Transverse colon (tissue), 4 donors: ENCODE measurements at regions of chrX and their contacts with region 1.

Region 1: DNA sequence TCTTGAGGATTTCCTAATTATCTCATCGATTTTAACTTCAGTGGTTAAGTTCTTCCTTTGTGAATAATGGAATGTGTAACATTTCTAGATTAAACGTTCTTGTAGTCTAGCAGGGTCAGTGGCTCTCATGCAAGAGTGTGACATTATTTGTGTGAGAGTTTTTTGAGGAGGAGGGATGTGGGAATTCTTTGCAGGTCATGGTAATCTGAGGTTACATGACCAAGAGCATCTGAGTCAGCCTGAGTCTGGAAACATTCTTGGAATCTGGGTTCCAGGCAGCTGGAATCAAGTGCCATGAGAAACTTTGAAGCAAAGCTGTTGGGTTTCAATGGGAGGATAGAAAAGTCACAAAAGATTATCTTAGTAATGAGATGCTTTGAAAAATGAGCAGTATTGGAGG is 49.5 kb downstream of the GK start:
- DNase-seq: no peak
- H3K4me3 ChIP-seq: no peak overlapping the region
- H3K27ac ChIP-seq: no peak overlapping the region
- H3K4me1 ChIP-seq: no peaks in the 10 kb centered on the region
- H3K27me3 ChIP-seq: no peaks in the 10 kb centered on the region
- CTCF ChIP-seq: no peak
- EP300 ChIP-seq: no peak
- POLR2A ChIP-seq: no peak

Region 2: DNA sequence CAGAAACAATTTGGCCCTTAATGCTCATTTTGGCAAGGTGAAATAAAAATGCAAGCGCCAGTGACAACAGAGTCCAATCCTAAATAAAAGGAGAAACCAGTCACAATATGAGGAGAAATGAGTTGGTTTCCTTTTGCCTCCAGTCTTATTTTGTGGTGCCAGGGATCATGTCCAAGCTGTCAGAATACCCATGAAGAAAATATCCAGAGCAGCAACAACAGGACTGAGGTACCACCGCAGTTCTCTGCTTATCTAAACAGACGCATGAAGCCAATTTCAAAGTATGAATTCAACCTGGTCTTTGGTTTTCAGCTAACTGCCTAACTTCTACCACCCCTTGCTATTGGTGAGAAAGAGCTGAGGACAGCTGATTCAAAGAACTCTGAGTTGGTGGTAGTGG is 687.3 kb before region 1 on chrX:
- in situ Hi-C with region 1: no loop called
- intact Hi-C with region 1: no loop called
- DNase-seq: no peak
- H3K4me3 ChIP-seq: no peak overlapping the region
- H3K27ac ChIP-seq: no peak overlapping the region
- H3K4me1 ChIP-seq: no peaks in the 10 kb centered on the region
- H3K27me3 ChIP-seq: no peaks in the 10 kb centered on the region
- CTCF ChIP-seq: no peak
- EP300 ChIP-seq: no peak
- POLR2A ChIP-seq: no peak

Region 3: GRCh38 chrX:30570505-30570904 is 132.2 kb before region 1 on chrX:
- in situ Hi-C with region 1: loop called in 1 of 4 experiments (anchors 25 kb)
- intact Hi-C with region 1: loop called (anchors 10 kb)
- DNase-seq: no peak
- H3K4me3 ChIP-seq: no peak overlapping the region
- H3K27ac ChIP-seq: no peak overlapping the region
- H3K4me1 ChIP-seq: no peaks in the 10 kb centered on the region
- H3K27me3 ChIP-seq: no peaks in the 10 kb centered on the region
- CTCF ChIP-seq: peak; percentile 30 to 60 (median 45)
- EP300 ChIP-seq: no peak
- POLR2A ChIP-seq: no peak